ENCODE measurements at regions of chr6 and their contacts with region 1.

Region 1: DNA sequence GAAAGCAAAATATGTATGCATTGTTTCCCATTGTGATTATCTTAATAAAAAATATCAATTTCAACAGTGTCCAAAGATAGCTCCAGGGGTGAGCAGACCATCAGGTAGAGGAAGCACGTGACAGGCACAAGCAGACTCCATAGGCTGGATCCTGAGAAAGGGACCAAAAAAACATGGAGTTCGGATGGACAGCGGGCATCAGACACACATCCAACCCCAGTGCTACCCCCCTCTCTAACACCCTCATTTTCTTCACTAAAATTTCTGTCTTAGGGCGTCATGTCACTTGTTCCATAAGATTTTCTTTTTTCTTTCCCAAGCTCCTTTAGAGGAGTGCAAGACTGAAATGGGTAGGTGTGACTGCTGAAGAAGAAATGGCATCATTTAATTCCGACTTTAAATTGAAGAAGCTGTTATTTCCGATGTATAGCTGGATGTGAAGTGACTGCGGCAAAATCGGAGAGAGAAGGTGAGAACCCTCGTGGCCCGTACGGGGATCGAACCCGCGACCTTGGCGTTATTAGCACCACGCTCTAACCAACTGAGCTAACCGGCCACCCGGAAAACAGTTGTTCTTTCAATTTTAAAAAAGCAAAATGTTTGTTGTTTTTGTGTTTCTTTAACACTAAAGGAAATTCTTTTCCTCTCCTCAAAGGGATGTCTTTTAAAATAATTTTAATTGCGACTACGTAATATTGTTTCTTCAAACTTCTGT is 10.3 kb upstream of the PRSS16 start:
- DNase-seq: peak; percentile 77
- ATAC-seq: peak; percentile 90
- H3K4me3 ChIP-seq: peak overlapping the region; percentile 60; the same call in 1 of the 2 replicates
- H3K27ac ChIP-seq: no peak overlapping the region
- H3K4me1 ChIP-seq: no peaks in the 10 kb centered on the region
- H3K27me3 ChIP-seq: no peaks in the 10 kb centered on the region
- CTCF ChIP-seq: no peak
- POLR2A ChIP-seq: no peak
- RAD21 ChIP-seq: no peak

Region 2: GRCh38 chr6:27111743-27112142 is 125.5 kb before region 1 on chr6:
- CTCF ChIA-PET with region 1: no interaction called
- POLR2A ChIA-PET with region 1: no interaction called
- dilution Hi-C with region 1: no loop called
- in situ Hi-C with region 1: no loop called
- intact Hi-C with region 1: no loop called
- DNase-seq: no peak
- ATAC-seq: no peak
- H3K4me3 ChIP-seq: no peak overlapping the region
- H3K27ac ChIP-seq: no peak overlapping the region
- H3K4me1 ChIP-seq: no peaks in the 10 kb centered on the region
- H3K27me3 ChIP-seq: no peaks in the 10 kb centered on the region
- CTCF ChIP-seq: no peak
- POLR2A ChIP-seq: no peak
- RAD21 ChIP-seq: no peak

Region 3: DNA sequence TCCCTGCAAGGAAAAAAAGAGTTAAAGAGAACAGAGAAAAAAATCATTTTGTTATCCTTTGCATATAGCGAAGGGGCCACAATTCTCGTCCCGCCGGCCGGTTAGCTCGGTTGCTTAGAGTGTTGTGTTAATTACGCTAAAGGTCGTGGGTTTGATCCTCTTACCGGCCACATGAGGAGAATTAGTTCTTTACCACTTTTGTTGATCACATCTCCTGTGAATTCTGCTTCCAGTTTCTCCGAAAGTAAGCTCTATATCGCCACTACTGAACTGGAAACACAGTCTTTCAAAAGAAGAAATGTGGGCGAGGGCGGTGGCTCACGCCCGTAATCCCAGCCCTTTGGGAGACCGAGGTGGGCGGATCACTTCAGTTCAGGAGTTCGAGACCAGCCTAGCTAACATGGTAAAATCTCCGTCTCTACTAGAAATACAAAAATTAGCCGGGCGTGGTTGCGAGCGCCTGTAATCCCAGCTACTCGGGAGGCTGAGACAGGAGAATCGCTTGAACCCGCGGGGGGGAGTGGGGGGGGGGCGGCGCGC is 23.7 kb after region 1 on chr6:
- CTCF ChIA-PET with region 1: no interaction called
- POLR2A ChIA-PET with region 1: interaction called, 17 read pairs
- dilution Hi-C with region 1: no loop called
- in situ Hi-C with region 1: no loop called
- intact Hi-C with region 1: no loop called
- DNase-seq: no peak
- ATAC-seq: no peak
- H3K4me3 ChIP-seq: peak overlapping the region; percentile 15; the same call in 1 of the 2 replicates
- H3K27ac ChIP-seq: no peak overlapping the region
- H3K4me1 ChIP-seq: no peaks in the 10 kb centered on the region
- H3K27me3 ChIP-seq: no peaks in the 10 kb centered on the region; the same call in none of the 2 replicates
- CTCF ChIP-seq: no peak
- POLR2A ChIP-seq: no peak
- RAD21 ChIP-seq: no peak

Region 4: DNA sequence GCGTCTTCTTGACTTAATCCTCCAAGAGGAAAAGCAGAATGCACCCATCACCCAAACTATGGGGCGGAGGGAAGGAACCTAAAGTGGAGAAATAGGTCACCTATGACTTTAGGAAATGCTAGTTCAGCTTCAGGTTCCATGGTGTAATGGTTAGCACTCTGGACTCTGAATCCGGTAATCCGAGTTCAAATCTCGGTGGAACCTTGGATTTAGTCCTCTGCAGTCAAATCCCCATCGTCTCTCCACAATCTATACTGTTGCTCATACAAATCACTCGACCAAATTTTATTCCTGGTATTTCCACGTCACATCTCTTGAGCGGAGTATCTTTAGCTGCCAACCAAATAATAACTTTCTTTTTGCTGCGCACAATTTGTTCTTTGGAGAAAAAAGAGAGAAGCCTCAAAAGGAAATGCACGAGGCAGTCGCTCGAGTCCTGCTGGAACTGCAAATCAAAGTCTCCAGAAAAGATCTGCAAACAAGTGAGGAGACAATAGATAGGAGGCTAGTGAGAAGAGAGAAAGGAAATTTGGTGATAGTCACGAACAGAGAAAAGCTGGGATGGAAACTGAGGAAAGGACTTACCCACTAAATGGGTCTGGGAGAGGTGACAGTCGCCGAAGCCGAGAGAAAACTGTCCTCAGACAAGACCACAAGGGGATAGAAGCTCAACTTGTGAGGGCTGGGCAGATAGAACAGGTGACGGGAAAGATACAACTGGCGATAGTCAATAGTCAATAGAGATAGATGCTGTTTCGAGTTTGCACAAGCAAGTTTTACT is 58.2 kb after region 1 on chr6:
- CTCF ChIA-PET with region 1: no interaction called
- POLR2A ChIA-PET with region 1: no interaction called
- dilution Hi-C with region 1: no loop called
- in situ Hi-C with region 1: no loop called
- intact Hi-C with region 1: loop called (anchors 5 kb)
- DNase-seq: peak; percentile 85
- ATAC-seq: peak; percentile 72
- H3K4me3 ChIP-seq: peak overlapping the region; percentile 48
- H3K27ac ChIP-seq: no peak overlapping the region
- H3K4me1 ChIP-seq: no peaks in the 10 kb centered on the region
- H3K27me3 ChIP-seq: peaks cover 9% of the 10 kb centered on the region
- CTCF ChIP-seq: no peak
- POLR2A ChIP-seq: no peak
- RAD21 ChIP-seq: no peak

Region 5: DNA sequence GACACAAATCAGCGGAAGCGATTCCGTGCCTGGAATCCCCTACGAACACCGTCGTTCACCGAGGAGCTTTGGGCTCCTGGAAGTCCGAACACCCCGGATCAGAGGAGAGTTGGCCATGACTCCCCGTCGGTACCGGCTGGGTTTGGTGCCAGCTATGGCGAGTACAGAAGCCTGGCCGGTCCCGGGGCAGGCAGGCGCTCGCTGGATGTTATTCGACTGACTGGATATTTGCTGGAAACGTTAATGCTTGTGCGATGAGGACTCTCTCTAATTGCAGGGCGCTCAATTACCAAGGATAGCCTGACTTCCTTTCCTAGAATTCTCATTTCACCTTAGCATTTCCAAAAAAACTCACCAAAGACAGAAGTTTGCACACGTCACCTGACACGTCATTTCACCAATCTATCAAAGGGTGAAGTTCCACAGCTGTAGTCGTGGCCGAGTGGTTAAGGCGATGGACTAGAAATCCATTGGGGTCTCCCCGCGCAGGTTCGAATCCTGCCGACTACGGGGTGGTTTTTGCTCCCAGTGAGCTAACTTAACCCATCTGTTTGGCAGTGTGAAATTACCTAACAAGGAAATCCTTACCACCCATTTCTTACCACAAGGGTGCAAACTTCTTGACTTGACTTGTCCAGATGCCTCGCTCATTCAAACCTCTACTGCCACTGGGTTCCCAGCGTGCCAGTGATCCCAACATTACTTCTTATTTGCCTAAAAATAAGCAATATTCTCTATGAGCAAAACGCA is 258.3 kb after region 1 on chr6:
- CTCF ChIA-PET with region 1: no interaction called
- POLR2A ChIA-PET with region 1: no interaction called
- dilution Hi-C with region 1: no loop called
- in situ Hi-C with region 1: no loop called
- intact Hi-C with region 1: loop called (anchors 5 kb)
- DNase-seq: peak; percentile 91
- ATAC-seq: peak; percentile 94
- H3K4me3 ChIP-seq: peak overlapping the region; percentile 71
- H3K27ac ChIP-seq: peak overlapping the region; percentile 19; the same call in 1 of the 2 replicates
- H3K4me1 ChIP-seq: no peaks in the 10 kb centered on the region
- H3K27me3 ChIP-seq: no peaks in the 10 kb centered on the region
- CTCF ChIP-seq: peak; percentile 42
- POLR2A ChIP-seq: no peak
- RAD21 ChIP-seq: no peak

Measured in IMR-90 (cell line).